Lower lobe of right lung (tissue), 2 donors: ENCODE measurements at regions of chr6 and their contacts with region 1.

Region 1: GRCh38 chr6:149082286-149082707 is 235.2 kb upstream of the TAB2 start:
- DNase-seq: peak; percentile 75
- ATAC-seq: peak; percentile 84 to 88
- H3K4me3 ChIP-seq: no peak overlapping the region
- H3K27ac ChIP-seq: no peak overlapping the region
- H3K4me1 ChIP-seq: peaks cover 19% of the 10 kb centered on the region
- H3K27me3 ChIP-seq: no peaks in the 10 kb centered on the region
- CTCF ChIP-seq: peak; percentile 82

Region 2: DNA sequence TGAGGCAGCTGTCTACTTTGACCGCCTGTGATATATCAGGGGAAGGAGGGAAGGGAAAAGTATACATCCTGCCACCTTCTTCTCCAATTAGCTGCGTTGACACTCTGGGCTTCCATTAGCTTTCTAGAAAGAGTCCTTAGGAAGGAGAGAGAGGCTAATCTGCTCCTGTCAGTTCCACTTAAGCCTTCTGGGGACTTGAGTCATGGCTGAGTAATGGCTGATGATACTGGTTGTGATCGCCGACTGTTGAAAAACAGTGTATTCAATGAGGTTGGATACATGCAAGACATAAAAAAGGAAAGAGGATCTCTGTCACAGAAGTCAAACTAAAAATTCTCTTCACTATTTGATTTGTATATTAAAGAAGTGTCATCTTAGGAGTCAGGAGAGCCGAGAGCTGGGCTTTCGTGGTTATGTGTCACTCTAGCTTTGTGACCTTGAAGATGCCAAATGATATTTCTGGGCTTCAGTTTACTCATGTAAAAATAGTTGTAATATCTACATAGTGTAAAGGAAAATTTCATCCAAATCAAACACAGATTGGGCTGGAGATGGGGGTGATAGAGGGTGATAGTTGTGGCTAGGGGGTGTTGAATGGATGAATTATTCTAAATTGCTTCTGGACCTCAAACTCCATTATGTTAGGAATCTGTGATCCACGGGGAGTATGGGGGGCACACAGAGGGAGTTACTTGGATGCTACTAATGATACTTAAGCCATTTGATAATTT is 146.4 kb before region 1 on chr6:
- intact Hi-C with region 1: no loop called
- DNase-seq: no peak
- ATAC-seq: no peak
- H3K4me3 ChIP-seq: no peak overlapping the region
- H3K27ac ChIP-seq: no peak overlapping the region
- H3K4me1 ChIP-seq: no peaks in the 10 kb centered on the region
- H3K27me3 ChIP-seq: no peaks in the 10 kb centered on the region
- CTCF ChIP-seq: no peak

Region 3: GRCh38 chr6:148989585-148989984 is 92.7 kb before region 1 on chr6:
- intact Hi-C with region 1: no loop called
- DNase-seq: no peak
- ATAC-seq: no peak
- H3K4me3 ChIP-seq: no peak overlapping the region
- H3K27ac ChIP-seq: no peak overlapping the region
- H3K4me1 ChIP-seq: no peaks in the 10 kb centered on the region
- H3K27me3 ChIP-seq: no peaks in the 10 kb centered on the region
- CTCF ChIP-seq: no peak

Region 4: DNA sequence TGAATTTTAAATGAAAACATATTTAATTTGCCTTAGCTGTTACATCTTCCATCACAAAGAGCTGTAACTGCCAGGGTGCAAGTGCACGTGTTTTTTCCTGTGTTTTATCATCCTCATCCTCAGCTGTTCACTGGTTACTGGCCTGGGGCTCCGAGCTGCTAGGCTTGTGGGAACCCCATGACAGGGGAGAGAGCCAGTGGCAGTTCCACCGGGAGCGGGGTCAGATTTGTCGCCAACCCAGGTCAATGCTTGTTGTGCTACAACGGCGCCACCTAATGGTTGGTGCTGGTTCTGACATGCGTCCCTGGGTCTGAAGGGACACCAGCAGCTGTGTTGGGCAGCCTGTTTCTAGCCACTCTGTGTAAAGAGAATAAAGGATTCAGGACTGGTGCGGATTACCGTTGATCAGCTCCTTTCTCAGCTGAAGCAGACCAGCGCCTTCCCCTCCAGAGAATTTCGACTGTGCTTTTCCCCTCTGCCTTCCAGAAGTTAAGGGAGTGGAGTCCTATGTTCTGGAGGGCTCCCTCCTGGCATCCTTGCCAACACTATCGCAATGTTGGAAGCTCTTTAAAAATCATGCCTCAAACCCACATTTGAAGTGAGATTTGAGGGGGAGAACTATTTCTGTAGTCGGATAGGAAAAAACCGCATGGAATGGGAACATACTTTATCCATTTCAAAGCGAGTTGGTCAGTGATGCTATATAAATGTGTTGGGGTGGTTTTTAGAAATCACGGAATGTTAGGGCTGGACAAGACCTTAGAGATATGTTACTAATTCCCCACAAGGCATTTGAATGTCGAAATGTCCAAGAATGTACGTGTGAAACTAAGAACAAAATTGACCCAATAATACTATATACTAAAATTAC is 349.8 kb after region 1 on chr6:
- intact Hi-C with region 1: loop called (anchors 5 kb)
- DNase-seq: peak; percentile 92
- ATAC-seq: peak; percentile 93
- H3K4me3 ChIP-seq: no peak overlapping the region
- H3K27ac ChIP-seq: no peak overlapping the region
- H3K4me1 ChIP-seq: peaks cover 7% of the 10 kb centered on the region
- H3K27me3 ChIP-seq: no peaks in the 10 kb centered on the region
- CTCF ChIP-seq: peak; percentile 96